ENCODE measurements at regions of chr18 and their contacts with region 1.

Region 1: DNA sequence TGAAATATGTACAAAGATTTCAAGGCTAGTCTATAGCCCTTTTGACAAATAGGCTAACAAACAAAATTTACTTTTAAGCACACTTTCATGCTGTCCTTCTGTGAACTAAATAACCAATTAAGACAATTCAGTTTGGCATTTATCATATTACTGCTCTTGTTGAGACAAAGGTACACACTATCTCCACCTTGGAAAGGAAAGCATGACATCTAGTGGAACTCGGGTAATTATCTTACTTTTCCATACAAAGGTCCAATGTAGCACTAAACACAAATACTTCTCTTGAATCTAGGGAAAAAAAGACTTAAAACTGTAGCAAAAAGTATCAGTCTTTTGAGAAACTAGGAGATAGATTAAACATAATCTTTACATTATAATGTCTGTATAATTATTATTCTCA is 125.0 kb upstream of the CD226 start:
- DNase-seq: peak in 3 of 5 donors; percentile 15 to 28 (median 23)
- H3K4me3 ChIP-seq: no peak overlapping the region
- H3K4me3 Mint-ChIP-seq: no peak overlapping the region
- H3K27ac ChIP-seq: no peak overlapping the region
- H3K27ac Mint-ChIP-seq: no peak overlapping the region
- H3K4me1 ChIP-seq: no peaks in the 10 kb centered on the region
- H3K4me1 Mint-ChIP-seq: peaks cover 0 to 2% (median 0%) of the 10 kb centered on the region in 4 donors
- H3K27me3 ChIP-seq: no peaks in the 10 kb centered on the region
- H3K27me3 Mint-ChIP-seq: no peaks in the 10 kb centered on the region

Region 2: DNA sequence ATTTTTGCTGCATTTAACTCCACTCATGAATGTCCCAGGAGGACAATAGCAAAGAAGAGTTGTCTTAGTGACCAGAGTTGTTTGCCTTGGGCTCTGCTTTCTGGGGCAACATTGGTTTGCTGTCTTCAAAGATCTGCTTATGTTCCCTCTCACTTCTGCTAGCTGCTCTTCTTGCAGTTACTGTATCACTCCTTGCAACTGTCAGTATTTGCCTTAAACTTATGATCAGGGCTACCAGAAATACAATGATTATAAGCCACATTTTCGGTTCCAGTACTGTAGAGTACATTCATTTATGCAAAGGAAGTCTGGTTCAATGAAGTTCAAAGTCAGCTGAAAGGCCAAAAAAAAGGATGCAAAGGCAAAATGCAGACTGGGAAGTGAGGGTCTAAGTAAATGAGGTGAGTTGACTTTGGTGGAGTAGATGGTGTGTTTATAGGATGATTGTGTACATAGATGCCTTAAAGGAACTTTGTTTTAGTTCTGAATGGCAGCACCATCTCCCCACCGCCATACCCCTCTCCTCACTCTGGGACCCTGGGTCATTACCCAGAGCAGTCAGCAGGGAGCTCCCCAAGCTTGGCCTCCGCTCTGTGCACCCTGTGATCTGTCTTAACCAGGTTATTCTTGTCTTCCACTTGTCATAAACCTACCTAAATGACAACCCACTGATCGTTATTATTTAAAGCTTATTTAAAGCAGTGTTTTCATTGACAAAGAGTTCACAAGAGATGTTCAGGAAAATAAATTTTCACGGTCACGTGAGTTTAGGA is 436.0 kb before region 1 on chr18:
- CTCF ChIA-PET with region 1: interaction called, 4 read pairs
- POLR2A ChIA-PET with region 1: no interaction called
- intact Hi-C with region 1: loop called (anchors 5 kb)
- DNase-seq: peak in 4 of 5 donors; percentile 12 to 24 (median 20)
- H3K4me3 ChIP-seq: no peak overlapping the region
- H3K4me3 Mint-ChIP-seq: no peak overlapping the region
- H3K27ac ChIP-seq: no peak overlapping the region
- H3K27ac Mint-ChIP-seq: no peak overlapping the region
- H3K4me1 ChIP-seq: no peaks in the 10 kb centered on the region
- H3K4me1 Mint-ChIP-seq: peaks cover 0 to 5% (median 2%) of the 10 kb centered on the region in 4 donors
- H3K27me3 ChIP-seq: peaks cover under 1% of the 10 kb centered on the region
- H3K27me3 Mint-ChIP-seq: peaks cover 3 to 4% of the 10 kb centered on the region in 2 donors

Region 3: DNA sequence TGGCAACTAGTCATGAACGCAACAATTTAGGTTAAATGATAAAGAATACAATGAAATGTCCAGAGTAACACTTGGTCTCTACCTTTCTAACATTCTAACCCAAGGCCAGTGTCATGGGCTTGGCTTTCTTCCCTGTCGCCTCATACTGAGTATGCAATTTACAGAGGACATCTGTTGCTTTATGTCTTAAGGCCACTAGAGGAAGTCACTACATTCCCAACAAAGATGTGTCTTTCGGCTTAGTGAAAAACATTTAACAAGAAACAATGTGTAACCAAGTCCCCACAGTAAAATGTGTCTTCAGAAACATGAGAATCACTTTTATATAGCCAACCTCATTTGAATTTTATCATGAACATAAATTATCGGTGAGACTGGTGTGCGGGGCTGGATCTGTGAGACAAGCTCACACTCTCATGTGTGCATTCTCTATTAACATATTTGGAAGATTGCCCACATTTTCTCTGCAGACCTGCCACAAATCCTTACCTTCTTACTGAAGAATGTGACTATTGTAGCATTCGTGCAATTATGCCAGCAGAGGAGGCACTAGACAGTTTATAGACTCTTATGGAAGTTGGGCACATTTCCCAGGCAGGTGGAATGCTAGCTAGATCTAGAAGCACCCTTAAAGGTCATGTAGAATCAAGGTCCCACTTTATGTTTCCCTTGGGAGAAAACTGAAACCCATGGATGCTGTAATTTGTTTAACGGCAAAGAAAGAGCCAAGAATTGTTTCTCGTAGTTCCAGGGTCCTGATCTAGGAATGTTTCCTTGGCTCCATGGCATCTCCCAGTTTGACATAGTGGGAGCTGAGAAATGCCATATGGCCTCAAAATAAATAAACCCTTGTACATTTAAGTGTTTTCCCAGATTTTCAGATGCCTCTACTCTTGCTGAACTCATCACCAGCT is 226.8 kb before region 1 on chr18:
- CTCF ChIA-PET with region 1: interaction called, 3 read pairs
- POLR2A ChIA-PET with region 1: no interaction called
- intact Hi-C with region 1: loop called (anchors 5 kb)
- DNase-seq: no peak
- H3K4me3 ChIP-seq: no peak overlapping the region
- H3K4me3 Mint-ChIP-seq: no peak overlapping the region
- H3K27ac ChIP-seq: no peak overlapping the region
- H3K27ac Mint-ChIP-seq: no peak overlapping the region
- H3K4me1 ChIP-seq: no peaks in the 10 kb centered on the region
- H3K4me1 Mint-ChIP-seq: peaks cover 0 to 4% (median 3%) of the 10 kb centered on the region in 4 donors
- H3K27me3 ChIP-seq: no peaks in the 10 kb centered on the region
- H3K27me3 Mint-ChIP-seq: no peaks in the 10 kb centered on the region